ENCODE measurements at regions of chr22 and their contacts with region 1.

Region 1: GRCh38 chr22:33605666-33606065 is 314.6 kb downstream of the LARGE1 start:
- DNase-seq: peak in 1 of 2 donors; percentile 64
- ATAC-seq: peak; percentile 87 to 97 (median 94)
- H3K4me3 ChIP-seq: no peak overlapping the region
- H3K27ac ChIP-seq: peak overlapping the region; percentile 38 to 83 (median 74)
- H3K4me1 ChIP-seq: peaks cover 0 to 37% (median 12%) of the 10 kb centered on the region in 9 donors
- H3K27me3 ChIP-seq: no peaks in the 10 kb centered on the region
- CTCF ChIP-seq: no peak

Region 2: GRCh38 chr22:33504941-33505625 is 100.6 kb before region 1 on chr22:
- intact Hi-C with region 1: no loop called
- DNase-seq: no peak
- ATAC-seq: peak in 2 of 8 donors; percentile 33 to 59
- H3K4me3 ChIP-seq: no peak overlapping the region
- H3K27ac ChIP-seq: no peak overlapping the region
- H3K4me1 ChIP-seq: peaks cover 0 to 19% (median 9%) of the 10 kb centered on the region in 9 donors
- H3K27me3 ChIP-seq: no peaks in the 10 kb centered on the region
- CTCF ChIP-seq: no peak

Region 3: DNA sequence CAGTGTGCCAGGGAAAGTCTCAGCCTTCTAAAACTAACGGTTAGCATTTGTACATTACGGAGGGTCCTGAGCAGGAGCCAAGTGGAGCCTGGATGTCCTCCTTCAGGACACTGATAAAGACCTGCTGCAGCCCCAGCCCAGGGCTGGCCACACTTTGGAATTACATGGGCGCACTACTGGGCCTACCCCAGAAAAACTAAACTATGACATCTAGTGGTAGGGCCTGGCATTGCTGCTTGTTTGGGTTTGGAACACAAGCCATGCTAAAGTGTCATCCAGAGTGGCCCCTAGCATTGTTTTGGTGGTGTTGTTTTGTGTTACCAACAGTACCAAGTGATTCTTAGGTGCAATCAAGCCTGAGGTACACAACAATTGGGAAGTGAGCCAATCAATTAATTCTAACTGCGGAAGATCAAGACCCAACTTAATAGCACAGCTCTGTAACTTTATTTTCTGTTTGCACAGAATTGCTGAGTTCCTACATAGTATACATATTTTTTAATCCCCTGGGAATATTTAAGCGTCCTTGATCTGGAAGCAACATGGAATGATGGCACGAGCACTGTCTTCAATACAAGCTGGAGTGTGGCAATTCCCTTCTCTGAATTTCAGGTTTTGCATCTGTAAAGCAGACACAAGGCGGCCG is 26.1 kb before region 1 on chr22:
- intact Hi-C with region 1: no loop called
- DNase-seq: peak; percentile 41 to 75
- ATAC-seq: peak; percentile 88 to 94 (median 92)
- H3K4me3 ChIP-seq: no peak overlapping the region
- H3K27ac ChIP-seq: no peak overlapping the region
- H3K4me1 ChIP-seq: peaks cover 7 to 42% (median 24%) of the 10 kb centered on the region in 9 donors
- H3K27me3 ChIP-seq: no peaks in the 10 kb centered on the region
- CTCF ChIP-seq: peak; percentile 78 to 96 (median 93)

Region 4: GRCh38 chr22:33658775-33659174 is 53.1 kb after region 1 on chr22:
- intact Hi-C with region 1: loop called in 1 of 10 experiments (anchors 10 kb)
- DNase-seq: peak; percentile 29 to 74
- ATAC-seq: peak; percentile 80 to 93 (median 89)
- H3K4me3 ChIP-seq: no peak overlapping the region
- H3K27ac ChIP-seq: peak overlapping the region in 9 of 10 donors; percentile 36 to 86 (median 65)
- H3K4me1 ChIP-seq: peaks cover 0 to 52% (median 29%) of the 10 kb centered on the region in 9 donors
- H3K27me3 ChIP-seq: no peaks in the 10 kb centered on the region
- CTCF ChIP-seq: no peak

Region 5: DNA sequence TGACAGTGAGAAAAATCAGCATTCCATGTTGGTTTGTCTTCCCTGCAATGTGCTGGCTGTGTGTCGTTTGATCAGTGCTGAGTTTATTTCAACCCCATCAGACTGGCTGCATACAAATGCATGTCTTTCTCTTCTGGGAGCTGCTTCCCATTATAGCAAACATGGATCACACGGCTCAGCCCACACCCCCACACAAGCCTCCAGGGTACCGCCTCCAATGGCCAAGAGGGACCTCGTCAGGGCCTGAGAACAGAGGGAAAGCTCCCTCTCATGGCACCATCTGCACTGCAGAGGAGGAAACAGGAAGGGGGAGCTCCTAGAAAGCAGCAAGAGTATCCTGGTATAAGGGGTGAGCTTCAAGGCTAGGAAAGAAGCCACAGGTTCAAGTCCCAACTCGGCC is 100.4 kb after region 1 on chr22:
- intact Hi-C with region 1: loop called in 1 of 10 experiments (anchors 10 kb)
- DNase-seq: peak in 1 of 2 donors; percentile 29
- ATAC-seq: peak in 7 of 8 donors; percentile 48 to 89 (median 66)
- H3K4me3 ChIP-seq: no peak overlapping the region
- H3K27ac ChIP-seq: peak overlapping the region in 1 of 10 donors; percentile 0
- H3K4me1 ChIP-seq: peaks cover 0 to 57% (median 13%) of the 10 kb centered on the region in 9 donors
- H3K27me3 ChIP-seq: no peaks in the 10 kb centered on the region
- CTCF ChIP-seq: peak in 4 of 9 donors; percentile 12 to 44 (median 14)

Region 6: DNA sequence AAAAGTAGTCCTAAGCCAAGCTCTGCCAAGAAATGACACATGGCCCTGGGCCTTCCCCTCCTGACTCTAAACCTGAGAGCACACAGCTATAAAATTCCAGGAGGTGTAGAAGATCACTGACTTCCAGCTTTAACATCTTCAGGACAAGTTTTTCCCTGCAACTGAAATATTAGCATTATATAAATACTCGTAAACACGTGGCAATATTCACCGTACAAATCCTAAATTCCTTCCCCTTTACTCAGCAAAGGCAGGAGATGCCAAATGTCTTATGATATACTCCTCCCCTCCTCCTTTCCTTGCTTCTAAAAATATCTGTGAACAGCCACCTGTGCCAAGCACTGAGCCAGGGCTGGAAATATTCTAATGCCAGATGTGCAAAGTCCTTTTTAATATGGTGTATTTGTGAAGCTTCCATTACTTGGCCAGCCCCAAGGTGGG is 120.6 kb after region 1 on chr22:
- intact Hi-C with region 1: loop called in 1 of 10 experiments (anchors 10 kb)
- DNase-seq: peak in 1 of 2 donors; percentile 36
- ATAC-seq: peak; percentile 39 to 90 (median 82)
- H3K4me3 ChIP-seq: no peak overlapping the region
- H3K27ac ChIP-seq: peak overlapping the region in 7 of 10 donors; percentile 40 to 62 (median 54)
- H3K4me1 ChIP-seq: peaks cover 0 to 59% (median 28%) of the 10 kb centered on the region in 9 donors
- H3K27me3 ChIP-seq: no peaks in the 10 kb centered on the region
- CTCF ChIP-seq: no peak